Upper lobe of right lung (tissue), 1 donor: ENCODE measurements at regions of chr3 and their contacts with region 1.

Region 1: DNA sequence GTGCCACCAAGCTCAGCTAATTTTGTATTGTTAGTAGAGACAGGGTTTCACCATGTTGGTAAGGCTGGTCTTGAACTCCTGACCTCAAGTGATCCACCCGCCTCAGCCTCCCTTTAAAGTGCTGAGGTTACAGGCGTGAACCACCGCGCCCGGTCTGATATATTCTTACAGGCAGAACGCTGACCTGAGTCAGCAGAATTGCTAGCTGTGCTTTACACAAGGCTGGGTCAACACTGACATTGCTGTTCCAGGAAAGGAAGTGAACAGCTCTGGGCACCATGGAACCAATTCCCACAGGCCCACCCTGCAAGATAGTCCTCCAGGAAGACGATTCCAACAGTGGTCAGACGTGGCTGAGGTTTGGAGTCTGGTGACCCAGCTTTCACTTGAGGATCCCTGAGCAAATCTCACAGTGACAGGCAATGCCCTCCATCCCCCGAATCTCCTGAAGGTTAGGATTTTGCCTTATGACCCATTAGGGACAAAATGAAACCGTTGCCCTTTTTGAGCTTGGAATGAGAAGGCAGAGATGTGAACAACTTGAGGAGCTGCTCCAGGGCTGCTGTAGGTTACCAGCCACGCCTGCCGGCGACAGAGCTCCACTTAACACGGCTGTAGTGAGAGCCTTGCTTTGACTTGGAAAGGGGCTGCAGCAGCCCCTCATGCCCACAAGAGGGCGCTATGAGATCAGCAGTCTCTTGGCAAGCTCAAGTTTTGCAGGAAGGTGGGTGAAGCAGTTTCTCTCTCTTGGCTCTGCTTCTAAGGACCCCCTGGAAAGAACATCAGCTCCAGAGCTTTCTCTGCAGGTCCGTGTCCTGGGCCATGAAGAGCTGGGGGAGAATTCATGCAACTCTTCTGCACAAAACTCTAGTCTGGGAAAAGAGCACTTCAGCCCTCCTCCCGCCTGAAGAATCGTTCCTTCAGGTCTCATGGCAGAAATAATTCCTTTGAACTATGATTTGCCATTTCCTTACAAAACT is 74.1 kb downstream of the SENP2 start:
- DNase-seq: peak; percentile 85
- ATAC-seq: peak; percentile 91
- H3K4me3 ChIP-seq: no peak overlapping the region
- H3K27ac ChIP-seq: peak overlapping the region; percentile 51
- H3K4me1 ChIP-seq: peaks cover 31% of the 10 kb centered on the region
- H3K27me3 ChIP-seq: no peaks in the 10 kb centered on the region
- CTCF ChIP-seq: peak; percentile 99

Region 2: GRCh38 chr3:185717121-185717520 is 56.9 kb after region 1 on chr3:
- intact Hi-C with region 1: loop called (anchors 10 kb)
- DNase-seq: no peak
- ATAC-seq: peak; percentile 53
- H3K4me3 ChIP-seq: no peak overlapping the region
- H3K27ac ChIP-seq: peak overlapping the region; percentile 36
- H3K4me1 ChIP-seq: peaks cover 15% of the 10 kb centered on the region
- H3K27me3 ChIP-seq: no peaks in the 10 kb centered on the region
- CTCF ChIP-seq: no peak